ENCODE measurements at regions of chr1 and their contacts with region 1.

Region 1: DNA sequence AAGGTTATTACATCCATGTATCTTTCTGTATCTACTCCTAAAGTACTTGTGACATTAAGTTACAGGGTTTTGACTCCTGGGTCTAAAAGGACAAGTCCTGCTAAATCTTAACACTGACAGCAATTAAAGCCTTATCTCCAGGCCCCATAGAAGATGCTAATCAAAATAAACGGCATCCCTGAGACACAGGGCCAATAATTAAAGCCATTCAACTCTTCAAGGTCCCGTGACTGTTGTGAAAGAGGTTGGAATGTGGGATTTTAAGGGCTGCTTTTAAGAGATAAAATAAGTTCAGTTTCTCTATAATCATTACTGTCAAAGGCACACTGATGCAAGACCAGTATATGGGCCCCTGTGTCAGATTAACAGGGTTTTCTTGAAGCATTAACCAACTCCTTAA is 8.3 kb downstream of the DNAI4 start:
- DNase-seq: no peak

Region 2: DNA sequence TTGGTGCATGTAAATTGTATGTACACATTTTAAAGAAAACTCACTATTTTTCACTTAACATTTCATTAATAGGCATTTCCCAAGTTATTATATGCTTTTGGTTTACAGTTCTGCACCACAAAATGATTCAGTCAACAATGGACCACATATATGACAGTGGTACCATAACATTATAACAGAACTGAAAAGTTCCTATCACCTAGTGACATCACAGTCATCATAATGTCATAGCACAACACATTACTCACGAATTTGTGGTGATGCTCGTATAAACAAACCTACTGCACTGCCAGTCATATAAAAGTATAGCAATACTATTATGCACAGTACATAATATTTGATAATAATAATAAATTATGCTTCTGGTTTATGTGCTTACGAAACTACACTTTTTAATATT is 22.6 kb before region 1 on chr1:
- CTCF ChIA-PET with region 1: interaction called, 11 read pairs
- POLR2A ChIA-PET with region 1: no interaction called
- DNase-seq: no peak